T-cell (primary cell): ENCODE measurements at regions of chr1 and their contacts with region 1.

Region 1: GRCh38 chr1:107142140-107142542 is 1.3 kb downstream of the NTNG1 start:
- DNase-seq: peak in 1 of 35 experiments; percentile 34
- ATAC-seq: no peak
- H3K4me3 ChIP-seq: peak overlapping the region; percentile 43 to 66
- H3K4me3 Mint-ChIP-seq: peak overlapping the region; percentile 76 to 87 (median 79)
- H3K27ac ChIP-seq: no peak overlapping the region
- H3K27ac Mint-ChIP-seq: no peak overlapping the region
- H3K4me1 ChIP-seq: peaks cover 6 to 18% of the 10 kb centered on the region in 2 experiments
- H3K4me1 Mint-ChIP-seq: peaks cover 22 to 31% (median 25%) of the 10 kb centered on the region in 3 donors
- H3K27me3 ChIP-seq: peaks cover 15 to 27% of the 10 kb centered on the region in 2 experiments
- H3K27me3 Mint-ChIP-seq: peaks cover 52 to 70% of the 10 kb centered on the region in 2 donors

Region 2: DNA sequence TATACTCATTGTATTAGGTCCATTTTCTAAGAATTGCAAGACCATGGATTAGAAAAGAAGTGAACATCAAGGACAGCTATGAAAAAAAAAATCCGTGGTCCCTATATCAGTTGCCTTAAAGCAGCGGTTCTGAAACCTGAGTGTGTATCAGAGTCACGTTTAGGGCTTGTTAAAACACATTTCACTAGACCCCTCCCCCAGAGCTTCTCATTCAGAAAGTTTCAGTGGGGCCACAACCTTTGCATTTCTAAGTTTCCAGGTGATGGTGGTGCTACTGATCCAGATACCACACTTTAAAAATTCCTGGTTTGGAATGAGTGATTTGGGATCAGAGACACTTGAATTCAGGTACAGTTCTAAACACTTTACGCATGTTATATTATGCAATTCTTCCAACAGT is 181.7 kb before region 1 on chr1:
- CTCF ChIA-PET with region 1: interaction called in 1 of 2 experiments, 10 read pairs
- POLR2A ChIA-PET with region 1: no interaction called
- DNase-seq: no peak
- ATAC-seq: no peak
- H3K4me3 ChIP-seq: no peak overlapping the region
- H3K4me3 Mint-ChIP-seq: no peak overlapping the region
- H3K27ac ChIP-seq: no peak overlapping the region
- H3K27ac Mint-ChIP-seq: no peak overlapping the region
- H3K4me1 ChIP-seq: no peaks in the 10 kb centered on the region
- H3K4me1 Mint-ChIP-seq: no peaks in the 10 kb centered on the region
- H3K27me3 ChIP-seq: no peaks in the 10 kb centered on the region
- H3K27me3 Mint-ChIP-seq: peaks cover 0 to 2% of the 10 kb centered on the region in 2 donors

Region 3: DNA sequence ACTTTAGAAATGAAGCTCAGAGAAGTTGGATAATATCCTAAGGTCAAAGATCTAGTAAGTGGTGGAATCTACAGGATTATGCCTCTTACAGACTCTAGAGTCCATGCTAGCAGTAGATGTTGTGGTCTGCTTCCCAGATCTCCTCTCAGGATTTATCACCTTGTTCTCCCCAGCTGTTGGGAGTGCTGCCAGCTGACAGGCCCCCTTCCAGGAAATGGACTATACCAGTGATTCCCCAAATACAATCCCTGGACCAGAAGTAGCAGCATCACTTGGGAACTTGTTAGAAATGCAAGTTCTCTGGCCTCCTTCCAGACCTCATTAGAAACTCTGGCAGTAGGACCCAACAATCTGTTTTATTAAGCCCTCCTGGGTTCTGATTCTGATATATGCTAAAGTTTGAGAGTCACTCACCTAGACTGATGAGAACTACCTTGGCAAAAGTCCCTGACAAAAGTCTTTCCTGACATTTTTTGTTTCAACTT is 25.8 kb before region 1 on chr1:
- CTCF ChIA-PET with region 1: no interaction called
- POLR2A ChIA-PET with region 1: no interaction called
- DNase-seq: no peak
- ATAC-seq: no peak
- H3K4me3 ChIP-seq: no peak overlapping the region
- H3K4me3 Mint-ChIP-seq: no peak overlapping the region
- H3K27ac ChIP-seq: no peak overlapping the region
- H3K27ac Mint-ChIP-seq: no peak overlapping the region
- H3K4me1 ChIP-seq: no peaks in the 10 kb centered on the region
- H3K4me1 Mint-ChIP-seq: no peaks in the 10 kb centered on the region
- H3K27me3 ChIP-seq: no peaks in the 10 kb centered on the region
- H3K27me3 Mint-ChIP-seq: peaks cover 8 to 32% of the 10 kb centered on the region in 2 donors